ENCODE measurements at regions of chr13 and their contacts with region 1.

Region 1: DNA sequence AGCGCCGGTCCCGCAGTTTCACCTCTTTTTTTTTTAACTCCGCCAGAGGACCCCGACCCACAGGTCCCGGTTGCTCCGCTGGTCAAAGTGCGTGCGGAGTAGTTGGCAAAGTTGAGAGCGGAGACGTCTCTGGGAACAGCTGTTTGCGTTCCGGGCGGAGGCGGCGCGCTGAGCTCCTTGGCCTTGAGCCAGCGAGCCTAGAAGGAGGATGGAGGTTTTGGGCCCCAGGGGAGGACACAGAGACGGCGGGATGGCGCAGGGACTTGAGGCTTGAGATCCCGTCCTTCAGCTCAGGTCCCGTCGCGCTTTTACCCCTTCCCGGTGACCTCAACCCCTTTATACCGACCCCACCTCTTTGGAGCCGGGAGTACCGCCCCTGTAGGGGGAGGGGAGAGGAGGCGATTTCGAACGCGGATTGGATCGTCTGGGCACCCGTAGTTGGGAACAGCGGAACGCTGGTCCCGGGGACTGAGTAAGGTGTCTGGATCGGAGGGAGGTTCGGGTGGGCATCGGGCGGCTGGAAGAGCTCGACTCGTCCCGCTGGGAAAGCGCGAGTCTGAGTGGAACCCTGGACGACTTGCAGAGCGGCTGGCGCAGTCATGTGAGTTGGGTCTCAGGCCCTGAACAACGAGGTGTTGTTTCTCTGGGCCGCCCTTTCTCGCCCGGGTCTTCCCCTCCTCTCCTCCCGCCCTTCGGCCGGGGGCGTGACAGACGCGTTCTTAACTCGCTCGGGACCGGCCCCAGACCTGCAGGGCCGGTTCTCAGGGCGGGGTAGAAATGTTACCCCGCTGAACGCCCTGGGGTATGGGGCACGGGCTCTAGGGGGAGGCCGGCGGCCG is at the start of gene WBP4:
- DNase-seq: peak; percentile 76 to 93 (median 88)
- H3K4me3 ChIP-seq: peak within 1 kb of the TSS; percentile 98
- H3K4me3 Mint-ChIP-seq: peak within 1 kb of the TSS; percentile 97 to 100 (median 100)
- H3K27ac ChIP-seq: peak within 1 kb of the TSS; percentile 88
- H3K27ac Mint-ChIP-seq: peak within 1 kb of the TSS; percentile 98 to 100 (median 99)
- H3K4me1 ChIP-seq: peaks cover 24% of the 10 kb centered on the region
- H3K4me1 Mint-ChIP-seq: peaks cover 40 to 67% (median 52%) of the 10 kb centered on the region in 3 donors
- H3K27me3 ChIP-seq: no peaks in the 10 kb centered on the region
- H3K27me3 Mint-ChIP-seq: peaks cover 0 to 14% of the 10 kb centered on the region in 2 donors
- total RNA-seq, gene WBP4: 15.5 to 15.8 TPM

Region 2: GRCh38 chr13:40922437-40923040 is 138.8 kb before region 1 on chr13:
- CTCF ChIA-PET with region 1: interaction called, 15 read pairs
- POLR2A ChIA-PET with region 1: interaction called, 10 read pairs
- DNase-seq: no peak
- H3K4me3 ChIP-seq: no peak overlapping the region
- H3K4me3 Mint-ChIP-seq: peak overlapping the region; percentile 54 to 84 (median 72)
- H3K27ac ChIP-seq: no peak overlapping the region
- H3K27ac Mint-ChIP-seq: peak overlapping the region in 6 of 8 donors; percentile 47 to 87 (median 76)
- H3K4me1 ChIP-seq: peaks cover 7% of the 10 kb centered on the region
- H3K4me1 Mint-ChIP-seq: peaks cover 21 to 35% (median 31%) of the 10 kb centered on the region in 3 donors
- H3K27me3 ChIP-seq: no peaks in the 10 kb centered on the region
- H3K27me3 Mint-ChIP-seq: no peaks in the 10 kb centered on the region

Region 3: GRCh38 chr13:41019011-41019487 is 42.2 kb before region 1 on chr13 and contains the start of gene ELF1:
- CTCF ChIA-PET with region 1: interaction called, 7 read pairs
- POLR2A ChIA-PET with region 1: interaction called, 31 read pairs
- DNase-seq: peak; percentile 38 to 78 (median 72)
- H3K4me3 ChIP-seq: peak within 1 kb of the TSS; percentile 66
- H3K4me3 Mint-ChIP-seq: peak within 1 kb of the TSS; percentile 89 to 95 (median 92)
- H3K27ac ChIP-seq: peak within 1 kb of the TSS; percentile 91
- H3K27ac Mint-ChIP-seq: peak within 1 kb of the TSS; percentile 84 to 99 (median 97)
- H3K4me1 ChIP-seq: peaks cover 31% of the 10 kb centered on the region
- H3K4me1 Mint-ChIP-seq: peaks cover 37 to 61% (median 49%) of the 10 kb centered on the region in 3 donors
- H3K27me3 ChIP-seq: no peaks in the 10 kb centered on the region
- H3K27me3 Mint-ChIP-seq: no peaks in the 10 kb centered on the region
- total RNA-seq, gene ELF1: 76.8 to 77.6 TPM

Region 4: GRCh38 chr13:41111454-41111853 is 50.2 kb after region 1 on chr13:
- CTCF ChIA-PET with region 1: no interaction called
- POLR2A ChIA-PET with region 1: no interaction called
- DNase-seq: no peak
- H3K4me3 ChIP-seq: no peak overlapping the region
- H3K4me3 Mint-ChIP-seq: no peak overlapping the region
- H3K27ac ChIP-seq: no peak overlapping the region
- H3K27ac Mint-ChIP-seq: no peak overlapping the region
- H3K4me1 ChIP-seq: no peaks in the 10 kb centered on the region
- H3K4me1 Mint-ChIP-seq: no peaks in the 10 kb centered on the region
- H3K27me3 ChIP-seq: no peaks in the 10 kb centered on the region
- H3K27me3 Mint-ChIP-seq: no peaks in the 10 kb centered on the region

Measured in CD8-positive, alpha-beta memory T cell (primary cell).